PC-9 (cell line): ENCODE measurements at regions of chr19 and their contacts with region 1.

Region 1: GRCh38 chr19:6530386-6531161 is at the start of gene TNFSF9:
- DNase-seq: peak; percentile 64 to 90
- H3K4me3 ChIP-seq: peak within 1 kb of the TSS; percentile 90
- H3K27ac ChIP-seq: peak within 1 kb of the TSS; percentile 82
- H3K4me1 ChIP-seq: peaks cover 5% of the 10 kb centered on the region; the same call in 1 of the 2 replicates
- H3K27me3 ChIP-seq: no peaks in the 10 kb centered on the region
- CTCF ChIP-seq: no peak
- total RNA-seq, gene TNFSF9: 8.4 and 11.2 TPM in 2 replicates

Region 2: DNA sequence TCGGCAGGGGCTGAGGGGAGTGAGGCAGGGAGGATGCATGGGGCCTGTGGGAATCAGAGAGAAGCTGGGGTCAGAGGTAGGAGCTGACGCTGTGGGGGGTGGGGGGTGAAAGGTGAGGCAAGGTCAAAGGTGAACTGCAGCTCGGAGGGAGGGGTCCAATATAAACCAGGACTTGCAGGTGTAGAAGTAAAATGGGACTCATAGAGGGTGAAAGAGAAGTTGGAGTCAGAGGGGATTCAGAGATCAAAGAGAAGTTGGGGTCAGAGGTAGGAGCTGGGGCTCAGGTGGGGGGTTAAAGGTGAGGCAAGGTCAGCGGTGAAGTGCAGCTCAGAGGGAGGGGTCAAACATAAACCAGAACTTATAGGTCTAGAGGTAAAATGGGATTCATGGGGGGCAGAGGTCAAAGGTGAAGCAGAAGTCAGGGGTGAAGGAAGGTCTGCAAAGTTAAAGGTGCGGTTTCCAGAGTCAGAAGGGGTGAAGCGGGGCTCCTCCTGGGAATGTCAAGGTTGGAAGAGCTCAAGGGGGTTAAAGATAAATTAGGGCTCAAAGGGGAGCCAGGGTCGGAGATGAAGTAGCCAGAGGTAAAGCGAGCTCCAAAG is 36.0 kb before region 1 on chr19:
- CTCF ChIA-PET with region 1: no interaction called
- POLR2A ChIA-PET with region 1: interaction called, 16 read pairs
- intact Hi-C with region 1: no loop called
- DNase-seq: no peak
- H3K4me3 ChIP-seq: no peak overlapping the region
- H3K27ac ChIP-seq: no peak overlapping the region
- H3K4me1 ChIP-seq: no peaks in the 10 kb centered on the region
- H3K27me3 ChIP-seq: no peaks in the 10 kb centered on the region
- CTCF ChIP-seq: no peak

Region 3: GRCh38 chr19:6577476-6578125 is 47.0 kb after region 1 on chr19:
- CTCF ChIA-PET with region 1: no interaction called
- POLR2A ChIA-PET with region 1: interaction called, 18 read pairs
- intact Hi-C with region 1: no loop called
- DNase-seq: no peak
- H3K4me3 ChIP-seq: no peak overlapping the region
- H3K27ac ChIP-seq: peak overlapping the region; percentile 41; the same call in 1 of the 2 replicates
- H3K4me1 ChIP-seq: peaks cover 34% of the 10 kb centered on the region
- H3K27me3 ChIP-seq: no peaks in the 10 kb centered on the region
- CTCF ChIP-seq: no peak

Region 4: DNA sequence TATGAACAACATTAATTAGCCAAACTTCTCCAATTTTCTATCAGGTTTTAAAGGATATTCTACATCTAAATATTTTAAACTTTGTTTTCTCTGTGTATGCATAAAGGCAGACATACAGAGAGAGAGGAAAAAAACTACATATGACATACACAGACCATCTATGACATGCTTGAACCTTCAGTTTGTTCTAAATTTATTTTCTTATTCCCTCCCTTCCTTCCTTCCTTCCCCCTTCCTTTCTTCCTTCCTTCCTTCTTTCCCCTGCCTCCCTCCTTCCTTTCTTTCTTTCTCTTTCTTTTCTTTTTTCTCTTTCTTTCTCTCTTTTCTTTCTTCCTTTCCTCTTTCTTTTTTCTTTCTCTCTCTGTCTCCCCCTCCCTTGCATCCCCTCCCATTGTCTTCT is 96.2 kb after region 1 on chr19:
- CTCF ChIA-PET with region 1: no interaction called
- POLR2A ChIA-PET with region 1: interaction called, 10 read pairs
- intact Hi-C with region 1: no loop called
- DNase-seq: no peak
- H3K4me3 ChIP-seq: no peak overlapping the region
- H3K27ac ChIP-seq: no peak overlapping the region
- H3K4me1 ChIP-seq: no peaks in the 10 kb centered on the region
- H3K27me3 ChIP-seq: no peaks in the 10 kb centered on the region
- CTCF ChIP-seq: no peak

Region 5: DNA sequence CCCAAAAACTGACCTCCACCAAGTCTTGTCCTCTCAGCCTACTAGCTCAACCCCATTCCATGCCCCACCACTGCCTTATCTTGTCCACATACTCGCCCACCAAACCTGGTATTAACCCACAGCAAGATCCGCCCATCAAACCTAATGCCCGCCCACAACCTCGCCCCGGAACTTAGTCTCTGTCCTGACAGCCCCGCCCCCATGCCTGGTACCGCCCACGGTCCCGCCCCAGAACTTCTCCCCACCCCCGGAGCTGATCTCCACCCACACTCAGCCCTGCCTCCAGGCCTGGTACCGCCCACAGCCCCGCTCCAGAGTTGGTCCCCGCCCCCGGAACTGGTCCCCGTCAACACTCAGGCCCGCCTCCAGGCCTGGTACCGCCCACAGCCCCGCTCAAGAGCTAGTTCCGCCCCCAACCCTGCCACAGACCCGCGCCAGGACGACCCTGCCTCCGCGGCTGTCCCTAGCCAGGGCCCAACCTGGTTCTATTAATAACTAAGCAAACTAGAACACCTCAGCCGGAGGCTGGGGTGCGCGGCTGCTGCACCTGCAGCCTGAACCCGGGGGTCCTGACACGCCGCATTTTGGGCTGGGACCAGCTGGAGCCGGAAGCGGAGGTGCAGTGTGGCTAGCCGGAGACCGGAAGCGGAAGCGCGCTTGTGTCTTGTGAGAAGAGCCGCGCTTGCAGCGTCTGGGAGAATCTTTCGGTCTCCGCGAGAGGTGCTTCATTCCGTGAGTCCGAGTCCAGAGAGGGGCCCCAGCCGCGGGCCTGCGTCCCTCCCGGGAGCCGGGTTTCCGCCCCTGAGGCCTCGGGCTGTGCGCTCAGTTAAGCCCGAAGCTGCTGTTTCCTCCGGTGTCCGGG is 538.7 kb after region 1 on chr19 and contains the start of gene ZNF557:
- CTCF ChIA-PET with region 1: no interaction called
- POLR2A ChIA-PET with region 1: interaction called, 15 read pairs
- intact Hi-C with region 1: no loop called
- DNase-seq: peak; percentile 77 to 94
- H3K4me3 ChIP-seq: peak within 1 kb of the TSS; percentile 94
- H3K27ac ChIP-seq: no peak within 1 kb of the TSS
- H3K4me1 ChIP-seq: no peaks in the 10 kb centered on the region
- H3K27me3 ChIP-seq: no peaks in the 10 kb centered on the region
- CTCF ChIP-seq: no peak
- total RNA-seq, gene ZNF557: 2.6 and 3.9 TPM in 2 replicates